Right ventricle myocardium inferior (tissue), 1 donor: ENCODE measurements at regions of chr6 and their contacts with region 1.

Region 1: GRCh38 chr6:26025894-26026832 is 61.1 kb upstream of the HFE start:
- DNase-seq: peak; percentile 95
- ATAC-seq: peak; percentile 66

Region 2: DNA sequence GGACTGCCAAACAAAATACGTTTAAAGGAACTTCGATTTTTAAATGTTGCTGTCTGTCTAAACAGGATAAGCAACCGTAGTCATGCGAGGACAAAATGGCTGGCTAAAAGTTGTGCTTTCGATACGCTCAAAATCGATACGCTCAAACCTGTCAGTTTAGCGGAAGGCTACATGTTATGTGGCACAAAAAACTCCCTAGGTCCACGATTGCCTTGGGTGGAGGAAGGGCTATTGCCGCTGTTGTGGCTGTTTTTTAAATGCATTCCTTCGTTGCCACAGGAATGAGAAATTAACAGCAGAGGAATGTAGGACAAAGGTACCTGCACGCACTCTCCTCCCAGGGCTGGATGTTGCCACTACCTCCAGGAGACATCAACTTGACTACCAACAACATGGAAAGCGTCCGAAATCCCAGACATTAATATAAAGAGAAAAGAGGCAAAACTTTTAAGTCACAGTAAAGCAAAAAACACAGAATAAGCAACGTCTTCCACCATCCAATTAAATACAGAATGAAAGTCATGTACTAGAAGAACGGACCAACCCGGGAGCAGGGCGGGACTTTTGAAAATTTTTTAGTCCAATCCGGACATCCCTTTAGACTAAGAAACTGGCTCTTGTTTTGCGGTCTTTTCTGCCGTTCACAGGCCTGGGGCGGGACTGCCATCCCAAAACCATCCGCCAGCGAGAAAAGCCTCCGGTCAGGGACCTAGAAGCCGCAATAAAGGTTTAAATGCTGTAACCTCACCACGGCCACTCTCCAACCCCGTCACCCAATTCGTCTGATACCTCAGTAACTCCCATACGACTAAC is 28.9 kb after region 1 on chr6:
- intact Hi-C with region 1: loop called (anchors 2 kb)
- DNase-seq: peak; percentile 85
- ATAC-seq: peak; percentile 91

Region 3: DNA sequence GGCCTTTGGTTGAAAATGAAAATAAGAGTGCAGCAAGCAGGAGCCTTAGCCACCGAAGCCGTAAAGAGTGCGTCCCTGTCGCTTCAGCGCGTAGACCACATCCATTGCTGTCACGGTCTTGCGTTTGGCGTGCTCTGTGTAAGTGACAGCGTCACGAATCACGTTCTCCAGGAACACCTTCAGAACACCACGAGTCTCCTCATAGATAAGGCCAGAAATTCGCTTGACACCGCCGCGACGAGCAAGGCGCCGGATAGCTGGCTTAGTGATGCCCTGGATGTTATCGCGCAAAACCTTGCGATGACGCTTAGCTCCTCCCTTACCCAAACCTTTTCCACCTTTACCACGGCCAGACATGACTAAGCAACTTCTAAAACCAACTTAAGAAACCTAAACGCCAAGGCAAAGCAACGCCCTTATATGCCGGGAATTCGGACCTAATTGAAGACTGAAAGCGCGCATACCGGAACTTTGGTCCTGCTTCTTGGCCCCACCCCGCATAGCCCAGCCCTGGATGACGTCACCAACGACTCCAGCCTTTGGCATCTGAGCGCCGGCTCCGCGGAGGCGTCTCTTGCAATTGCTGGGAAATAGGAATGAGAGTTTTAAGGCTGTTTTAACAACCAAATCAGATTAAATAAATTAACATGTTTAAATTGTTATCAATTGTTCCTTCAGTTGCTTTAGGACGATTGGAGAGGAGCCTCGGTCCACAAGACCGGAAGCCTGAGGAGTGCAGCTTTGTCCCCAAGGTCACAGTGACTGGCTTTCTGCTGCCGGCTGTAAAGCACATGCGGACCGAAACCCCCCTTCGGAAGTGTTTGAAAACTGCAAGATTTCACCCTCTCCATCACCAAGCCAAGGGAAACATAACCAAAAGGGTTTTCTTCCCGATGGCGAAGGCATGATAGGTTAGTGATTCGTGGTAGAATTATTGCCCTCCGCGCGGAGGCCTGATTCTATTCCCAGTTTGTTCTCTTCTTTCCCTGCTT is 259.3 kb after region 1 on chr6:
- intact Hi-C with region 1: loop called (anchors 5 kb)
- DNase-seq: peak; percentile 98
- ATAC-seq: peak; percentile 94

Region 4: DNA sequence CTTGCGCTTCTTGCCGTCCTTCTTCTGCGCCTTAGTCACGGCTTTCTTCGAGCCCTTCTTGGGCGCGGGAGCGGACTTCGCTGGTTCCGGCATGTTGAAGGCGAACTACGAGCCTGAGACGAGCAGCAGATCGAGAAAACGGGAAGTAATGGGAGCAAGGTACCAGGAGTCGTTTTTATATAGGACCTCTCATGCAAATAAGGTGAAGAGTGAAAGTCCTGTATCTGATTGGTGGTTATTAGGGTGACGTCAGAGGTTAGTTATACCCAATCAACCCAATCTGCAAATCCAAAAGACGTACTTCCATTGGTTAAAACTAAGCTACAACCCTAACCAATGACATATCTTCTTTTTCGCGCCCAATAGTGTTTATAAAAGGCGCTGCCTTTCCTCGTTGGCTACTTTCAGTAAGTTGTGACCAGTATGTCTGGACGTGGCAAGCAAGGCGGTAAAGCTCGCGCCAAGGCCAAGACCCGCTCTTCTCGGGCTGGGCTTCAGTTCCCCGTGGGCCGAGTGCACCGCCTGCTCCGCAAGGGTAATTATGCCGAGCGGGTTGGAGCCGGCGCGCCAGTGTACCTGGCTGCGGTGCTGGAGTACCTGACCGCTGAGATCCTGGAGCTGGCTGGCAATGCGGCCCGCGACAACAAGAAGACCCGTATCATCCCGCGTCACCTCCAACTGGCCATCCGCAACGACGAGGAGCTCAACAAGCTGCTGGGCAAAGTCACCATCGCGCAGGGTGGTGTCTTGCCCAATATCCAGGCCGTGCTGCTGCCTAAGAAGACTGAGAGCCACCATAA is 1120.7 kb after region 1 on chr6:
- intact Hi-C with region 1: loop called (anchors 2 kb)
- DNase-seq: peak; percentile 86
- ATAC-seq: peak; percentile 96

Region 5: DNA sequence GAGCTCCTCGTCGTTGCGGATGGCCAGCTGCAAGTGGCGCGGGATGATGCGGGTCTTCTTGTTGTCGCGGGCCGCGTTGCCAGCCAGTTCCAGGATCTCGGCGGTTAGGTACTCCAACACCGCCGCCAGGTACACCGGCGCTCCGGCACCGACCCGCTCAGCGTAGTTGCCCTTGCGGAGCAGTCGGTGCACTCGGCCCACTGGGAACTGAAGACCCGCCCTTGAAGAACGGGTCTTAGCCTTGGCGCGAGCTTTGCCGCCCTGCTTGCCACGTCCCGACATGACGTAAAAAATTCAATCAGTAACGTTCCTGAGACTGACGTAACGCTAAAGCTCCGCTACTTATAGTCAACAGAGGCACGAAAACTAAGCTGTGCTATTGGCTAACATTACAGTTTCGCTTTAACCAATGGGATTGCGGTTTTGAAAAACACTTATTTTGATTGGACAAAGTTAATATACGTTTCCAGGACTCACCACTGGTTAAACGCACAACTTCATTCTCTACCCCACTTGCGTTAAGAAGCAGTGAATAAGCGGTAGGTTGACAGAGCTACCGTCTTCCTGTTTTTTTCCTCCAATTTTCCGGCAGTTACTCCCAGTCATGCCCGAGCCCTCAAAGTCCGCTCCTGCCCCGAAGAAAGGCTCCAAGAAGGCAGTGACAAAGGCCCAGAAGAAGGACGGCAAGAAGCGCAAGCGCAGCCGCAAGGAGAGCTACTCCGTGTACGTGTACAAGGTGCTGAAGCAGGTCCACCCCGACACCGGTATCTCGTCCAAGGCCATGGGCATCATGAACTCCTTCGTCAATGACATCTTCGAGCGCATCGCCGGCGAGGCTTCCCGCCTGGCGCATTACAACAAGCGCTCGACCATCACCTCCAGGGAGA is 1812.1 kb after region 1 on chr6:
- intact Hi-C with region 1: loop called (anchors 10 kb)
- DNase-seq: peak; percentile 87
- ATAC-seq: peak; percentile 92